ENCODE measurements at regions of chr10 and their contacts with region 1.

Region 1: GRCh38 chr10:90862908-90863514 is 5.2 kb upstream of the HTR7 start:
- DNase-seq: peak in 3 of 5 donors; percentile 10 to 26 (median 14)
- H3K4me3 ChIP-seq: no peak overlapping the region
- H3K4me3 Mint-ChIP-seq: no peak overlapping the region
- H3K27ac ChIP-seq: no peak overlapping the region
- H3K27ac Mint-ChIP-seq: no peak overlapping the region
- H3K4me1 ChIP-seq: no peaks in the 10 kb centered on the region
- H3K4me1 Mint-ChIP-seq: peaks cover 0 to 6% (median 3%) of the 10 kb centered on the region in 4 donors
- H3K27me3 ChIP-seq: peaks cover 15% of the 10 kb centered on the region
- H3K27me3 Mint-ChIP-seq: peaks cover 21 to 29% of the 10 kb centered on the region in 2 donors

Region 2: DNA sequence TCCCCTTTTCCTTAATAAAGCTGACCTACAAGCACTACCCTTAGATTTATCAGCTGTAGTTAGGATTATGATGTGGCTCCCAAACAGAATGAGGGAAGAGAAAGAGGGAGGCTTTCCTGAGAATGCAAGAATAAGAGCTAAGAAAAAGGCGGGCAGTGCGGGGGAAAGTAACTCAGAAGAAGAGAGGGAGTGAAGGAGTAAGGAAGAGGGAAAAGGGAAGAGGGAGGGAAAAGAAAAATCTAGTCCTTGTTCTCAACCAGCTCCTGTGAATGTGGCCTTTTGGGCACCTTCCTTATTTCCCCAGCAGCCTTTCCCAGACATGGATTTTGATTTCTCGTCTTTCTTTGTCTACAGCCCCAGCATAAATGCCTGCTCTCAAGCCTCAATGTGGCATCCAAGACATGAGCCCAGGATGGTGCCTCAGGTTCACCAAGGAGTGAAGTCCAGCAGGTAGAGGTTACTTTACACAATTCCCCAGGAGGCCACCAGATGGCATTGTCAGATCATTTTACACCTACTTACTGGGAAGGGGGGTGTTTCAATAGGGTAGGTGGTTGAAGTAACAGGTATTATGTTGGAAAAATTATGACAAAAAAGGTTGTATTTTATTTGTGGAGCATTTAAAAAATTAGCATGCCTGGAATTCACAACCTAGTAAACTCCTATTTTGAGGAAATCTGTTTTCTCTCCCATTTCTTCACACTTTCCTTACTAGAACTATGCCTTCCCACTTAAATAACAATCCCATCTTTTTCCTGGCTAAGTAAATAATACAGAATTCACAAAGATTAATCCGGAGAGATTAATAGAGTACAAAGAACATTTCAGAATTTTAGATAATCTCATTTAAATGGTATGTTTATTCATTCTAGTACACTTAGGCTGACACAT is 111.7 kb before region 1 on chr10:
- CTCF ChIA-PET with region 1: interaction called, 10 read pairs
- POLR2A ChIA-PET with region 1: no interaction called
- intact Hi-C with region 1: loop called (anchors 1 kb)
- DNase-seq: peak; percentile 16 to 45 (median 29)
- H3K4me3 ChIP-seq: no peak overlapping the region
- H3K4me3 Mint-ChIP-seq: no peak overlapping the region
- H3K27ac ChIP-seq: no peak overlapping the region
- H3K27ac Mint-ChIP-seq: no peak overlapping the region
- H3K4me1 ChIP-seq: no peaks in the 10 kb centered on the region
- H3K4me1 Mint-ChIP-seq: no peaks in the 10 kb centered on the region
- H3K27me3 ChIP-seq: no peaks in the 10 kb centered on the region
- H3K27me3 Mint-ChIP-seq: peaks cover 14% of the 10 kb centered on the region in 2 donors